ENCODE measurements at regions of chr21 and their contacts with region 1.

Region 1: GRCh38 chr21:33324291-33325221 is at the start of gene IFNAR1:
- DNase-seq: peak; percentile 94 to 100 (median 98)
- ATAC-seq: peak; percentile 94
- H3K4me3 ChIP-seq: peak within 1 kb of the TSS; percentile 87
- H3K4me3 Mint-ChIP-seq: no peak within 1 kb of the TSS
- H3K27ac ChIP-seq: peak within 1 kb of the TSS; percentile 94
- H3K27ac Mint-ChIP-seq: no peak within 1 kb of the TSS
- H3K4me1 ChIP-seq: peaks cover 21 to 23% of the 10 kb centered on the region in 2 donors
- H3K4me1 Mint-ChIP-seq: peaks cover 0 to 33% (median 26%) of the 10 kb centered on the region in 7 donors
- H3K27me3 ChIP-seq: no peaks in the 10 kb centered on the region
- H3K27me3 Mint-ChIP-seq: peaks cover 0 to 2% (median 0%) of the 10 kb centered on the region in 5 donors
- total RNA-seq, gene IFNAR1: 24.7 to 60.8 (median 40.0) TPM

Region 2: DNA sequence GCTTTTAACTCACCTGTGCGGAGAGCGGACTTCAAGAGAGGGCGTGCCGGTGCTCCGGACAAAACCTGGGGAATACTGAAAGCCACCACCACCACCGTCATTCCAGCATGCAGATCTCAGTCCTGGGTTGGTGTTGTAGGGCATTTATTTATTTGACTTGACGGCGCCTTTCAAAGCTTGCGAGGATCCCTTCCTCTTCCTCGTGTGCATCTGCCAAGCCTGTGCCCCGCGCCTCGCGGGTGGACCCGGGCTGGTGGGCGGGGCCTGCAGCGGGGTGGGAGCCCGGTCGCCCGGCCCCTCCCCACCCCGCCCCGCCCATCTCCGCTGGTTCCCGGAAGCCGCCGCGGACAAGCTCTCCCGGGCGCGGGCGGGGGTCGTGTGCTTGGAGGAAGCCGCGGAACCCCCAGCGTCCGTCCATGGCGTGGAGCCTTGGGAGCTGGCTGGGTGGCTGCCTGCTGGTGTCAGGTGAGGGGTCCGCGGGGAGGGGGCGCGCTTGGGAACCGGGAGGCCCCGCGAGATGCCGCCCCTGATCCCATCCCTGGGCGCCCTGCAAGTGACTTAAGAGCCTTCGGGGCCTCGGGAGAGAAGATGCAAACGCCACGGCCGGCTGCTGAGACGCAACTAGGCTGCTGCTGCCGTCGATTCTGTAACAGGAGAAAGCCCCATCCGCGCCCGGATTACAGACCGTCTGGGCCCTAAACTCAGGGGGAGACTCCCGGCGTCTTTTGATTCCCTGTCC is 58.3 kb before region 1 on chr21 and contains the start of gene IL10RB:
- CTCF ChIA-PET with region 1: interaction called, 4 read pairs
- POLR2A ChIA-PET with region 1: interaction called, 14 read pairs
- intact Hi-C with region 1: loop called (anchors 1 to 2 kb)
- DNase-seq: peak; percentile 53 to 80 (median 62)
- ATAC-seq: peak; percentile 88
- H3K4me3 ChIP-seq: peak within 1 kb of the TSS; percentile 87
- H3K4me3 Mint-ChIP-seq: peak within 1 kb of the TSS; percentile 86 to 99 (median 96)
- H3K27ac ChIP-seq: peak within 1 kb of the TSS; percentile 83
- H3K27ac Mint-ChIP-seq: peak within 1 kb of the TSS; percentile 91 to 97 (median 94)
- H3K4me1 ChIP-seq: peaks cover 23 to 38% of the 10 kb centered on the region in 2 donors
- H3K4me1 Mint-ChIP-seq: peaks cover 45 to 78% (median 57%) of the 10 kb centered on the region in 7 donors
- H3K27me3 ChIP-seq: no peaks in the 10 kb centered on the region
- H3K27me3 Mint-ChIP-seq: no peaks in the 10 kb centered on the region
- total RNA-seq, gene IL10RB: 17.6 to 35.0 (median 27.2) TPM

Region 3: GRCh38 chr21:33299181-33299752 is 25.3 kb before region 1 on chr21:
- CTCF ChIA-PET with region 1: no interaction called
- POLR2A ChIA-PET with region 1: interaction called, 42 read pairs
- intact Hi-C with region 1: loop called in 1 of 2 experiments (anchors 1 kb)
- DNase-seq: peak in 7 of 9 donors; percentile 52 to 70 (median 62)
- ATAC-seq: peak; percentile 86
- H3K4me3 ChIP-seq: peak overlapping the region; percentile 33
- H3K4me3 Mint-ChIP-seq: peak overlapping the region; percentile 47 to 85 (median 72)
- H3K27ac ChIP-seq: peak overlapping the region; percentile 58
- H3K27ac Mint-ChIP-seq: peak overlapping the region; percentile 81 to 90 (median 85)
- H3K4me1 ChIP-seq: peaks cover 6 to 36% of the 10 kb centered on the region in 2 donors
- H3K4me1 Mint-ChIP-seq: peaks cover 36 to 77% (median 63%) of the 10 kb centered on the region in 7 donors
- H3K27me3 ChIP-seq: no peaks in the 10 kb centered on the region
- H3K27me3 Mint-ChIP-seq: no peaks in the 10 kb centered on the region

Region 4: DNA sequence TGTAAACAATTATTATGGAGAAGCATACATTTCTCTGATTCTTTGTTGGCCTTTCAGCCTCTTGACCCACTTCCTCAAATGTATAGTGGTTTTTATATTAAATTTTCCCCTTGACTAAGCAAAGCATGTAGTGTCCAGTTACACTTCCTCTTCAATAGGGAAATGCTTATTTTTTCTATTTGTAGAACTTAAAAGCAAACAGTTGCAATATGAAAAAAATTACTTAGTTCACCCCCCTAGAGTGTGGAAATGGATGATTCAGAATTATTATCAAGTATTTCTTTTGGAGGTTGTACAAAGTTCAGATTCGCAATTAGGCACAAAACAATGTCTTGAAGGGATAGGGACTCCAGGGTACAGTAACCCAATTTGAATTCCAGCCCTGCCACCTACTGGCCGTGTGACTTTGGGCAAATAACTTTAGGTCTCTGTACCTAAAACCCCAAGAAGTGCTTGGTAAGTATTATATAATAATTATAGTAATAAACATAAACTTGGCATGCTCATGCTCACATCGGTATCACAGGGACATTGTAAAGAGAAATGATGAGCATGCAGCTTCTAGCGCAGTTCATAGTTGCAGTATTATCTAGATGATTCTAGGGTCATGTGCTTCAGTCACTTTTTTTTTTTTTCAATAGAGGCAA is 50.0 kb after region 1 on chr21:
- CTCF ChIA-PET with region 1: no interaction called
- POLR2A ChIA-PET with region 1: interaction called, 11 read pairs
- intact Hi-C with region 1: loop called in 1 of 2 experiments (anchors 1 kb)
- DNase-seq: peak in 7 of 9 donors; percentile 25 to 61 (median 49)
- ATAC-seq: peak; percentile 88
- H3K4me3 ChIP-seq: no peak overlapping the region
- H3K4me3 Mint-ChIP-seq: no peak overlapping the region
- H3K27ac ChIP-seq: no peak overlapping the region
- H3K27ac Mint-ChIP-seq: peak overlapping the region in 2 of 9 donors; percentile 21 to 45
- H3K4me1 ChIP-seq: peaks cover 0 to 3% of the 10 kb centered on the region in 2 donors
- H3K4me1 Mint-ChIP-seq: peaks cover 6 to 23% (median 12%) of the 10 kb centered on the region in 7 donors
- H3K27me3 ChIP-seq: peaks cover 0 to 6% of the 10 kb centered on the region in 2 donors
- H3K27me3 Mint-ChIP-seq: peaks cover 0 to 36% (median 4%) of the 10 kb centered on the region in 5 donors

Region 5: DNA sequence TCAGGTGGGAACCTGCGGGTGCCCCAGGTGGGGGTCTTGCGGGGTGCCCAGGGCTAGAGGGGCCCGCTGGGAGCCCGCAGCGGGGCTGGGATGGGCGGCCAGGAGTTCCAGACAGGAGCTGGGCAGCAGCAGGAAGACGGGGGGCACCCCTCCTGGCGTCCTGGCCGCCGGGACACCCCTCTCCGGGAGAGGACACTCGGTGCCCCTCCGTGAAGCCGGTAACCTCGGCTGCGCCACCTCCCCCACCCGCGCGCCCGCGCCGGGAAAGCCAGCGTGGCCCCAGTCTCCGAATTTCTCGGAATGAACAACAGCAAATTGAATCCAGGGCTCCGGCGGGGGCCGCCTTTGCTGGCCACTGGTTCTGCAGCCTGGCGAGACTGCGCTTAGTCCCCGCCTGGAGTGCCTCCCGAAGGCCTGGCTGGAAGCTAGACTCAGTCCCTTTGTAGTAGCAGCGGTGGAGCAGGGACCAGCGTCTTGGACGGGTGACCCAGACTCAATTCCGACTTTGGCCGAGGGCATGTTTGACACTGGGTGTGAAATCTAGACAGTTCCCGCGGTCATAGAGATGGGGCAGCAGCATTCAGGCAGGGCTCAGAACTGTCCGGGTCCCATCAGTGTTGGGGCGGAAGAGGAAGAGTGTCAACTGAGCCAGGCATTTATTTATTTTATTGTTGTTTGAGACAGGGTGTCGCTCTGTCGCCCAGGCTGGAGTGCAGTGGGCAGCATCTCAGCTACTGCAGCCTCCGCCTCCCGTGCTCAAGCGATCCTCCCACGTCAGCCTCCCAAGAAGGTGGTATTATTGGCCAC is 79.4 kb after region 1 on chr21:
- CTCF ChIA-PET with region 1: interaction called, 4 read pairs
- POLR2A ChIA-PET with region 1: interaction called, 4 read pairs
- intact Hi-C with region 1: loop called in 1 of 2 experiments (anchors 2 kb)
- DNase-seq: peak in 7 of 9 donors; percentile 21 to 43 (median 29)
- ATAC-seq: peak; percentile 30
- H3K4me3 ChIP-seq: peak overlapping the region; percentile 77
- H3K4me3 Mint-ChIP-seq: peak overlapping the region; percentile 87 to 99 (median 97)
- H3K27ac ChIP-seq: peak overlapping the region; percentile 84
- H3K27ac Mint-ChIP-seq: peak overlapping the region; percentile 4 to 98 (median 94)
- H3K4me1 ChIP-seq: peaks cover 16 to 25% of the 10 kb centered on the region in 2 donors
- H3K4me1 Mint-ChIP-seq: peaks cover 25 to 60% (median 54%) of the 10 kb centered on the region in 7 donors
- H3K27me3 ChIP-seq: no peaks in the 10 kb centered on the region
- H3K27me3 Mint-ChIP-seq: peaks cover 0 to 63% (median 0%) of the 10 kb centered on the region in 5 donors

Region 6: GRCh38 chr21:33491373-33492102 is 167.0 kb after region 1 on chr21 and contains the start of gene DNAJC28:
- CTCF ChIA-PET with region 1: no interaction called
- POLR2A ChIA-PET with region 1: no interaction called
- intact Hi-C with region 1: loop called in 1 of 2 experiments (anchors 2 kb)
- DNase-seq: peak; percentile 91 to 96 (median 95)
- ATAC-seq: peak; percentile 99
- H3K4me3 ChIP-seq: peak within 1 kb of the TSS; percentile 93
- H3K4me3 Mint-ChIP-seq: peak within 1 kb of the TSS; percentile 86 to 97 (median 92)
- H3K27ac ChIP-seq: peak within 1 kb of the TSS; percentile 74
- H3K27ac Mint-ChIP-seq: peak within 1 kb of the TSS; percentile 73 to 97 (median 92)
- H3K4me1 ChIP-seq: peaks cover 0 to 5% of the 10 kb centered on the region in 2 donors
- H3K4me1 Mint-ChIP-seq: peaks cover 5 to 14% (median 12%) of the 10 kb centered on the region in 7 donors
- H3K27me3 ChIP-seq: no peaks in the 10 kb centered on the region
- H3K27me3 Mint-ChIP-seq: peaks cover 0 to 15% (median 0%) of the 10 kb centered on the region in 5 donors
- total RNA-seq, gene DNAJC28: 0.27 to 1.5 (median 0.61) TPM in 4 of 5 experiments, not detected in the other